ENCODE measurements at regions of chr13 and their contacts with region 1.

Region 1: DNA sequence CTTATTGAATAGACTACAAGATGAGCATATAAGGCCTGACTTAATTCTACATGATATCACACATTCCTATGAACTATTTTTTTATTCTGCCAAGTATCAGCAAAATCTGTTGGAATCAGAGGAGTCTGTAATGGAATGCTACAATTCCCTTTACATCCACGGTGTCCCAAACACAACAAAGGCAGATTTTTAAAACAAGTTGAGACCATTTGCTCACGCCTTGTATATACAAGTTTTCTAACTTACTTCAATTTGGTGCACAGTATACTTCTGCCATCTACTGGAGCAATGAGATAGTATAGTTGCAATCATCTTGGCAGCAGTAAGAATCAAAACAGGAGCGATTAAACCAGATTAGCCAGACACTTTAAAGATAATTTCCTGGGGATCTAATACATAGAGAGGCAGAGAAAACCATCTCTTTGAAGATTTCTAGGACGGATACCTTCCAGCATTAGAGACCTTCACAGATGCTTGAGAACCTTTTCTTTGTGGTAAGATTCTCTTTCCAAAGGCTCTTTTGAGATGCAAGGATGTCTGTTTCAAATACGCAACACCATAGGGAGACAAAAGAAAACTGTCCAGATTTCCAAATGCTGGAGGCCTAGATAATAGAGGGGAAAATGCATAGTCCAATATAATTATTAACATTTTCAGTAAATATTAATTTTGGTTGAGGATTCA is 302.0 kb upstream of the MIR17HG start:
- DNase-seq: peak; percentile 52
- H3K4me3 ChIP-seq: no peak overlapping the region
- H3K27ac ChIP-seq: no peak overlapping the region
- H3K4me1 ChIP-seq: no peaks in the 10 kb centered on the region
- CTCF ChIP-seq: no peak

Region 2: GRCh38 chr13:89565476-89566100 is 1479.9 kb before region 1 on chr13:
- CTCF ChIA-PET with region 1: no interaction called
- POLR2A ChIA-PET with region 1: interaction called, 12 read pairs
- intact Hi-C with region 1: no loop called
- DNase-seq: no peak
- H3K4me3 ChIP-seq: no peak overlapping the region
- H3K27ac ChIP-seq: no peak overlapping the region
- H3K4me1 ChIP-seq: no peaks in the 10 kb centered on the region
- CTCF ChIP-seq: no peak

Region 3: DNA sequence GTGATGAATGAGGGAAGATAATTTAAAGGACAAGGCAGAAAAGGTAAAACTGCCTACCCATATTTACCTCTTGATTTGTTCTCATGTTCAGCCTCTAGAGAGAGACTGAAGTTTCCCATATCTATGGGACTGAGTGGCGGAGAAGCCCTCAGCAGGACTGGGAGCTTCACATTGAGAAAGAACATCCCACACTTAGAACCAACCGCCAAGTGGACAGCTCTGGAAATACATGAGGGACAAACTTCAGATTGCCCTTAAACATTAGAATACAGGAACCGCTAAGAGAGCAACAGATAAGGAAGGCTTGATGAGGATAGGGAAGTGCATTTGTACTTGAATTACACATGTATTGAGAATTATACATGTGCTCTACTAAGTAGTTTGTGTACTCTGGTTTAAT is 14.0 kb before region 1 on chr13:
- CTCF ChIA-PET with region 1: interaction called, 3 read pairs
- POLR2A ChIA-PET with region 1: interaction called, 12 read pairs
- intact Hi-C with region 1: no loop called
- DNase-seq: no peak
- H3K4me3 ChIP-seq: no peak overlapping the region
- H3K27ac ChIP-seq: no peak overlapping the region
- H3K4me1 ChIP-seq: no peaks in the 10 kb centered on the region
- CTCF ChIP-seq: no peak

Region 4: DNA sequence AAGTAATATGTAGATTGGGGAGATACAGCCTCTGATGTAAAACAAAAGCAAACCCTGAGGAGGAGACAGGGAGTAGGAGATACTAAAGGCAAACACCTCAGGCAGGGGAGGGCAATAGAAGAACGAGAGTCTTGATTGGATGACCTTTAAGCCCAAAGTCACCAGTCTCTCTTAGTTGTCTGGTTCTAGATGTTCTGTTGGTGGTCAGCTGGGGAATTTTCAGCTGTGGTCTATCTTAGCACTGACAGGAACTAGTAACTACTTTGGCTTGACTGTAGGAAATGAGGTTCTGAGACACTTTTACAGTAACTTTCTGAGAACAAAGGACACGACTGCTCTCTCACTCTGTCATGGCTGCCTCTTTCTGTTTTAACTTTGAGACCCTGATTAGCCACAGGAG is 11.3 kb after region 1 on chr13:
- CTCF ChIA-PET with region 1: interaction called, 3 read pairs
- POLR2A ChIA-PET with region 1: interaction called, 52 read pairs
- intact Hi-C with region 1: no loop called
- DNase-seq: no peak
- H3K4me3 ChIP-seq: no peak overlapping the region
- H3K27ac ChIP-seq: no peak overlapping the region
- H3K4me1 ChIP-seq: no peaks in the 10 kb centered on the region
- CTCF ChIP-seq: no peak

Measured in OCI-LY7 (cell line).